Activated CD4-positive, alpha-beta memory T cell treated with anti-CD3 and anti-CD28 coated beads for 36 hours (primary cell): ENCODE measurements at regions of chr2 and their contacts with region 1.

Region 1: DNA sequence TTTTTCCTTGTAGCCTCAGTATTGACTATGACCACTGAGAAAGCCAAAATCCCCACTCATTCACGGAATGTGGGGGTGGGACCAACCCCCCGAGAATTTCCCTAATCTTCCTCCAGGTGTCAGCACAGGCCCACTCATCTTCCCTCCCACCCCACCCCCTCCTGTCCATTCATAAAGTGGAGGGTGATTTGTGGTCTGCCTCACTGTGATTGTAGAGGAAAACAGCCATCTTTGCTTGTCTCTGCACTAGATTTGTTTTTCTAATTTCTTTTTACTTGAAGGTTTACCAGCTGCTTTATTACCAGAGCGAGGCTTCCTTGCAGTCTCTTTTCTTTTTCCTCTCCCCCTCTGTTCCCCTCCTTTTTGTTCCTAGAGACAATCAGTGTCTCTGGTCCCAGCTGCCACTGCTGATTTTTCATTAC is 171.8 kb downstream of the ICOS start:
- DNase-seq: peak; percentile 78
- H3K4me3 Mint-ChIP-seq: peak overlapping the region; percentile 55
- H3K27ac Mint-ChIP-seq: peak overlapping the region; percentile 90
- H3K4me1 Mint-ChIP-seq: peaks cover 71% of the 10 kb centered on the region
- H3K27me3 Mint-ChIP-seq: peaks cover 4% of the 10 kb centered on the region

Region 2: GRCh38 chr2:203989521-203989920 is 118.8 kb before region 1 on chr2:
- CTCF ChIA-PET with region 1: no interaction called
- POLR2A ChIA-PET with region 1: interaction called, 3 read pairs
- intact Hi-C with region 1: loop called (anchors 1 kb)
- DNase-seq: no peak
- H3K4me3 Mint-ChIP-seq: peak overlapping the region; percentile 18
- H3K27ac Mint-ChIP-seq: peak overlapping the region; percentile 86
- H3K4me1 Mint-ChIP-seq: peaks cover 35% of the 10 kb centered on the region
- H3K27me3 Mint-ChIP-seq: no peaks in the 10 kb centered on the region

Region 3: DNA sequence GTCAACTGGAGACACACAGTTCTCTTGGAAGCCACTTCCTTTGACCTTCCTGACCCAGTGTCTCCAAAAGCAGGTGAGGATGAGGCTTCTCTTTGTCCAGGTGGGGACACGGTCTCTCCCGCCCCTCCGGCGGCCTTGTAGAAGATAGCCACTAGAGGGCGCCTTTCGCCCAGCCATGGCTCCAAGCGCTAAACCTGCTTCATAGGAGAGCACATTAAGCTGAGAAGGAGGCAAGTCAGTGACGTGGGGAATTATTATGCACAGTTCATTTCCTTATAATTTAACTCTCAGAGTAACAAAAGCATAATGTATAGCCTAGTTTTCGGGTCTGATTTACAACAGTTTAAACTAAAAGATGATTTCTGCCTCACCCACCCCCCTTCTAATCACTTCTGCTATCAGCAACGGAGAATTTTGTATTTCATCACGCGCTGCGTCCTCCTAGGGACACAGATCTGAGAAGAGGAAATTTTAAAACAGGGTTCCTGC is 37.0 kb after region 1 on chr2:
- CTCF ChIA-PET with region 1: interaction called, 9 read pairs
- POLR2A ChIA-PET with region 1: no interaction called
- intact Hi-C with region 1: loop called (anchors 1 kb)
- DNase-seq: peak; percentile 88
- H3K4me3 Mint-ChIP-seq: peak overlapping the region; percentile 73
- H3K27ac Mint-ChIP-seq: no peak overlapping the region
- H3K4me1 Mint-ChIP-seq: peaks cover 10% of the 10 kb centered on the region
- H3K27me3 Mint-ChIP-seq: peaks cover 12% of the 10 kb centered on the region

Region 4: GRCh38 chr2:204967199-204967960 is 859.0 kb after region 1 on chr2:
- CTCF ChIA-PET with region 1: no interaction called
- POLR2A ChIA-PET with region 1: no interaction called
- intact Hi-C with region 1: loop called (anchors 2 kb)
- DNase-seq: peak; percentile 59
- H3K4me3 Mint-ChIP-seq: peak overlapping the region; percentile 21
- H3K27ac Mint-ChIP-seq: peak overlapping the region; percentile 83
- H3K4me1 Mint-ChIP-seq: peaks cover 56% of the 10 kb centered on the region
- H3K27me3 Mint-ChIP-seq: no peaks in the 10 kb centered on the region

Region 5: GRCh38 chr2:205706769-205707381 is 1598.5 kb after region 1 on chr2:
- CTCF ChIA-PET with region 1: no interaction called
- POLR2A ChIA-PET with region 1: no interaction called
- intact Hi-C with region 1: loop called (anchors 1 kb)
- DNase-seq: peak; percentile 76
- H3K4me3 Mint-ChIP-seq: no peak overlapping the region
- H3K27ac Mint-ChIP-seq: peak overlapping the region; percentile 90
- H3K4me1 Mint-ChIP-seq: peaks cover 18% of the 10 kb centered on the region
- H3K27me3 Mint-ChIP-seq: peaks cover 2% of the 10 kb centered on the region